GM23248 (cell line): ENCODE measurements at regions of chr11 and their contacts with region 1.

Region 1: GRCh38 chr11:6251120-6251733 is 8.4 kb upstream of the CCKBR start:
- DNase-seq: peak; percentile 80
- H3K4me3 ChIP-seq: no peak overlapping the region
- H3K27ac ChIP-seq: no peak overlapping the region
- H3K4me1 ChIP-seq: peaks cover 24% of the 10 kb centered on the region
- H3K27me3 ChIP-seq: peaks cover 4% of the 10 kb centered on the region

Region 2: DNA sequence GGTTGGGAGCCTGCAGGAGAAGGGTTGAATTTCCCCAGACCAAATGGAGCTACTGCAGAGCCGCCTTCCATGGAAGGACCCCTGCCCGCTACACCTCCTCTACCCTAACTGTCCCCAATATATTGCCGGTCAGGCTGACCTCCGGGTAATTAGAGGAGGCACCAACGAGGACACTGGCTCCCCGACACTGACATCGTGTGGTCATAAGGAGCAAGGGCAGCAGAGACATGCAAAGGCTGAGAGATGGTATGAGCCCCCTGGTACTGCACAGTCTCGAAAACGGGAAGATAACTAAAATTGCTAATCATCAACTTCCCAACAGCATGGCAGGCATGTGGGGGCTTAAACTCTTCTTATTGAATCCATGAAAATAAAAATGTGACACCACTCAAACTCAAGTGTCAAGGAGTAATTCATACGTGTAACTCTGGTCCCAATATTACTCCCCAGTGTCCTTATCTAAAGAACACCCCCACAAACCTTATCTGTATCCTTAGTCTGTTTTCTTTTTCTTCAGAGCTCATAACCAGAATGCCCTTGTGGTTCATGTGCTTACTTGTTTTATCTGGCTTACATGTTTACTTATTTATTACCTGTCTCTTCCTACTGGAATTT is 64.7 kb after region 1 on chr11:
- in situ Hi-C with region 1: loop called (anchors 10 kb)
- DNase-seq: peak; percentile 86
- H3K4me3 ChIP-seq: 0 out of 2 replicates have a peak overlapping the region, but pooled peaks have one; percentile 19
- H3K27ac ChIP-seq: no peak overlapping the region
- H3K4me1 ChIP-seq: peaks cover 10% of the 10 kb centered on the region; the same call in 1 of the 2 replicates
- H3K27me3 ChIP-seq: no peaks in the 10 kb centered on the region

Region 3: GRCh38 chr11:6353367-6353987 is 102.2 kb after region 1 on chr11:
- in situ Hi-C with region 1: loop called (anchors 10 kb)
- DNase-seq: peak; percentile 61
- H3K4me3 ChIP-seq: no peak overlapping the region
- H3K27ac ChIP-seq: no peak overlapping the region
- H3K4me1 ChIP-seq: peaks cover 20% of the 10 kb centered on the region
- H3K27me3 ChIP-seq: no peaks in the 10 kb centered on the region

Region 4: GRCh38 chr11:6674862-6675261 is 423.6 kb after region 1 on chr11:
- in situ Hi-C with region 1: no loop called
- DNase-seq: no peak
- H3K4me3 ChIP-seq: no peak overlapping the region
- H3K27ac ChIP-seq: no peak overlapping the region
- H3K4me1 ChIP-seq: no peaks in the 10 kb centered on the region
- H3K27me3 ChIP-seq: no peaks in the 10 kb centered on the region